Heart left ventricle (tissue), 16 donors: ENCODE measurements at regions of chr1 and their contacts with region 1.

Region 1: GRCh38 chr1:157073944-157074767 is 25.5 kb downstream of the ETV3L start:
- DNase-seq: peak; percentile 60 to 80 (median 74)
- ATAC-seq: peak in 2 of 4 donors; percentile 56 to 71
- H3K4me3 ChIP-seq: peak overlapping the region in 8 of 12 donors; percentile 10 to 43 (median 28)
- H3K27ac ChIP-seq: no peak overlapping the region
- H3K4me1 ChIP-seq: peaks cover 0 to 8% (median 3%) of the 10 kb centered on the region in 12 donors
- H3K27me3 ChIP-seq: peaks cover 0 to 9% (median 0%) of the 10 kb centered on the region in 9 donors
- CTCF ChIP-seq: peak; percentile 58 to 81 (median 66)
- POLR2A ChIP-seq: no peak

Region 2: GRCh38 chr1:156388174-156389137 is 685.7 kb before region 1 on chr1:
- intact Hi-C with region 1: no loop called
- DNase-seq: peak in 1 of 5 donors; percentile 24
- ATAC-seq: no peak
- H3K4me3 ChIP-seq: peak overlapping the region in 8 of 12 donors; percentile 6 to 36 (median 26)
- H3K27ac ChIP-seq: no peak overlapping the region
- H3K4me1 ChIP-seq: peaks cover 0 to 11% (median 2%) of the 10 kb centered on the region in 12 donors
- H3K27me3 ChIP-seq: peaks cover 8 to 55% (median 29%) of the 10 kb centered on the region in 9 donors
- CTCF ChIP-seq: no peak
- POLR2A ChIP-seq: no peak

Region 3: DNA sequence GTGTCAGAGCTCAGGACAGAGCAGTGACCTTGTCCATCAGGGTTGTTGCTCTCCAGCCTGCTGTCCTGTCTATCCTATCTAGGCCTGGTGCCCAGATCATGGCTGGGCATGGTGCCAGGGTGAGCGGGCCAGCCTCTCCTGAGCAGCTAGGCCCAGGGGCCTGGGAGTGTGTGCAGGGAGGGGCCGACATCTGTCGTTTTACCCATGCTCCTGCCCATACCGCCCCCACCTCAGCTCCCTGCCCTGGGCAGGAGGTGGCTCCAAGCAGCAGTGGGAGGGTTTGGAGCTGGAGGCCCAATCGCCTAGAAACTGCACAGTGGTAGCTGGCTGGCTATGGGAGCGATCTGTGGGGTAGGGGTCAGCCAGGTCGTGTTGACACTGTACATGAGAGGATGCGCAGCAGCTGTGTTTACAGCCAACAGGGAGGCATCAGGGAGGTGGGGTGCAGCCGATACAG is 221.7 kb before region 1 on chr1:
- intact Hi-C with region 1: no loop called
- DNase-seq: peak; percentile 81 to 90 (median 84)
- ATAC-seq: peak; percentile 92 to 97 (median 95)
- H3K4me3 ChIP-seq: no peak overlapping the region
- H3K27ac ChIP-seq: peak overlapping the region in 9 of 12 donors; percentile 56 to 90 (median 71)
- H3K4me1 ChIP-seq: peaks cover 0 to 23% (median 8%) of the 10 kb centered on the region in 12 donors
- H3K27me3 ChIP-seq: peaks cover 0 to 25% (median 11%) of the 10 kb centered on the region in 9 donors
- CTCF ChIP-seq: no peak
- POLR2A ChIP-seq: no peak

Region 4: DNA sequence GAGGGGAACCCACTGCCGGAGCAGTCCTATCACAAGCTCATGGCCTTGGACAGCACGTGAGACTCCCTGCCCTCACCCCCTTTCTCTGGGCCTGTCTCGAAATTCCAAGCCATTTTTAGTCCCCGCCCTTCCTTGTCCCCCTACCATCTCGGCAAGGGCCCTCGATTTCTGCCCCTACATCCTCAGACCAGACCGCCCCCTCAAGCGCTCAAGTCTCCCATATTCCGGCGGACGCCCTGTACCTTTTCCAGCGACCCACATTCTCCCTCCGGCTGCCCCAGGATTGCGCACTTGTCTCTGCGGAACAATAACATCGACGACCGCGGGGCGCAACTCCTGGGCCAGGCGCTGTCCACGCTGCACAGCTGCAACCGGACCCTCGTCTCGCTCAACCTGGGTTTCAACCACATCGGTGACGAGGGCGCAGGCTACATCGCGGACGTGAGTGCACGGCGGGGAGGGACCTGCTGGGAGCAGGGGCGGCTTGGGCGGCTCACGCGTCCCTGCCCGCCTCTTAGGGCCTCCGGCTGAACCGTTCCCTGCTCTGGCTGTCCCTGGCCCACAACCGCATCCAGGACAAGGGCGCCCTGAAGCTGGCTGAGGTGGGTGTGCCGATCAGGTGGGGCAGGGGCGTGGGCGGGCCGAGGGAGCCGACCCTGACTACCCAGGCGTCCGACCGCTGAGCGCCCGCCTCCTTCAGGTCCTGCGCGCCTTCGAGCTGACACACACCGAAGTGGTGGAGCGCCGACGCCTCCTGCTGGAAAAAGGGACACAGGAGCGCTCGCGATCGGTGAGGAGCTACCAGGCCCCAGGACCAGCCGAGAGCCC is 146.7 kb before region 1 on chr1:
- intact Hi-C with region 1: no loop called
- DNase-seq: peak; percentile 65 to 88 (median 68)
- ATAC-seq: peak; percentile 35 to 71 (median 55)
- H3K4me3 ChIP-seq: peak overlapping the region in 10 of 12 donors; percentile 27 to 41 (median 31)
- H3K27ac ChIP-seq: no peak overlapping the region
- H3K4me1 ChIP-seq: peaks cover 4 to 42% (median 19%) of the 10 kb centered on the region in 12 donors
- H3K27me3 ChIP-seq: peaks cover 24 to 69% (median 53%) of the 10 kb centered on the region in 9 donors
- CTCF ChIP-seq: peak; percentile 40 to 77 (median 64)
- POLR2A ChIP-seq: no peak

Region 5: GRCh38 chr1:156961709-156962108 is 112.4 kb before region 1 on chr1:
- intact Hi-C with region 1: loop called in 3 of 10 experiments (anchors 10 kb)
- DNase-seq: no peak
- ATAC-seq: no peak
- H3K4me3 ChIP-seq: peak overlapping the region in 1 of 12 donors; percentile 45
- H3K27ac ChIP-seq: no peak overlapping the region
- H3K4me1 ChIP-seq: peaks cover 0 to 14% (median 0%) of the 10 kb centered on the region in 12 donors
- H3K27me3 ChIP-seq: no peaks in the 10 kb centered on the region
- CTCF ChIP-seq: peak in 1 of 12 donors; percentile 6
- POLR2A ChIP-seq: no peak

Region 6: DNA sequence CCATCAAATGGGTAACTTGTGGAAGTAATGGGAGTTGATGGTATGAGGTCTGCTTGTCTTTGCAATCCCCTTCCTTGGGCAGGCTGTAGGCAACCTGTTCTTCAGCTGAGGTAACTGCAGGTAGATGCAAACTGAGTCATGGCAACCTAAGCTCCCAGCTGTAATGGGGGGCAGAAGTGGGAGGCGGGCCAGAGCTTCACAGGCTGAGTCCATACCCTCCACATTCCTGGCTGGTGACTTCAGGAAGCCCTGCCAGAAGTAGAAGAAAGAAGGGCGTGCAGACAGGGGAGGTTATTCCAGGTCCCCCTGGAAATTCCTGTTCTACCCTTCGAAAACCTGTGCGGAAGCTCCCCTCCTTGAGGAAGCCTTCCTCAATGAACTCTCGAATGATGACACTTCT is 73.5 kb before region 1 on chr1:
- intact Hi-C with region 1: loop called in 1 of 10 experiments (anchors 10 kb)
- DNase-seq: no peak
- ATAC-seq: no peak
- H3K4me3 ChIP-seq: no peak overlapping the region
- H3K27ac ChIP-seq: no peak overlapping the region
- H3K4me1 ChIP-seq: peaks cover 0 to 34% (median 11%) of the 10 kb centered on the region in 12 donors
- H3K27me3 ChIP-seq: no peaks in the 10 kb centered on the region
- CTCF ChIP-seq: no peak
- POLR2A ChIP-seq: no peak

Region 7: DNA sequence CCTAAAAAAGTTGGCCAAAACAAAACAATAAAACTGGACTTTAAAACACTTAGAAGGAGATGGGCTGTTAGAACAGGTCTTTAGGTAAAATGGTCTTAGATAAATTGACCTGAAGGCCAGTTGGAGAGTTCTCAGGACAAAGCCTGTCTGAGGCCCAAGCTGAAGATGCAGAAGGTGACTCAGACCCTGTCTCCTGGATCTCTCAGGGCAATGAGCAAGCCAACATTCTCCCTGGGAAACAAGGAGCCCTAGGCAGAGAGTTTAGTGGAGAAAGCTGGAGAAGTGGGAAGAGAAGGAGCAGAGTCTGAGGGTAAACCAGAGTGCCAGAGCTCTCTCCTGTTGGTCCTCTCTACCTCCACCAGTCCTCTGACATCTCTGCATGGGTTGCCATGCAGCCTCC is 408.0 kb after region 1 on chr1:
- intact Hi-C with region 1: no loop called
- DNase-seq: no peak
- ATAC-seq: no peak
- H3K4me3 ChIP-seq: no peak overlapping the region
- H3K27ac ChIP-seq: no peak overlapping the region
- H3K4me1 ChIP-seq: no peaks in the 10 kb centered on the region
- H3K27me3 ChIP-seq: peaks cover 0 to 9% (median 0%) of the 10 kb centered on the region in 9 donors
- CTCF ChIP-seq: no peak
- POLR2A ChIP-seq: no peak